ENCODE measurements at regions of chr17 and their contacts with region 1.

Region 1: DNA sequence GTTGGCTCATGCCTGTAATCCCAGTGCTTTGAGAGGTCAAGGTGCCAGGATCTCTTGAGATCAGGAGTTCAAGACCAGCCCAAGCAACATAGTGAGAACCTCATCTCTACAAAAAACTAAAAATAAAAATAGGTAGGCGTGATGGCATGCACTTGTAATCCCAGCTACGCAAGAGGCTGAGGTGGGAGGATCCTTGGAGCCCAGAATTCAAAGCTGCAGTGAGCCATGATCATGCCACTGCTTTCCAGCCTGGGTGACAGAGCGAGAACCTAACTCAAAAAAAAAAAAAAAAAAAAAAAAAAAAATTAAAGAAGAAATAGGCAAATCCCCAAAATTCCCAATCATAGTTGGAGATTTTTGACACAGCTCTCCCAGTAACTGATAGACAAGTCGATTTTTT is 32.2 kb upstream of the SRCIN1 start:
- DNase-seq: no peak
- H3K4me3 Mint-ChIP-seq: no peak overlapping the region
- H3K27ac Mint-ChIP-seq: no peak overlapping the region
- H3K4me1 Mint-ChIP-seq: no peaks in the 10 kb centered on the region
- H3K27me3 Mint-ChIP-seq: peaks cover 27% of the 10 kb centered on the region
- CTCF ChIP-seq: no peak

Region 2: GRCh38 chr17:38656959-38657823 is 19.2 kb after region 1 on chr17:
- CTCF ChIA-PET with region 1: interaction called, 10 read pairs
- intact Hi-C with region 1: no loop called
- DNase-seq: peak; percentile 88
- H3K4me3 Mint-ChIP-seq: peak overlapping the region; percentile 36
- H3K27ac Mint-ChIP-seq: peak overlapping the region; percentile 31
- H3K4me1 Mint-ChIP-seq: peaks cover 30% of the 10 kb centered on the region
- H3K27me3 Mint-ChIP-seq: peaks cover 49% of the 10 kb centered on the region
- CTCF ChIP-seq: no peak

Region 3: DNA sequence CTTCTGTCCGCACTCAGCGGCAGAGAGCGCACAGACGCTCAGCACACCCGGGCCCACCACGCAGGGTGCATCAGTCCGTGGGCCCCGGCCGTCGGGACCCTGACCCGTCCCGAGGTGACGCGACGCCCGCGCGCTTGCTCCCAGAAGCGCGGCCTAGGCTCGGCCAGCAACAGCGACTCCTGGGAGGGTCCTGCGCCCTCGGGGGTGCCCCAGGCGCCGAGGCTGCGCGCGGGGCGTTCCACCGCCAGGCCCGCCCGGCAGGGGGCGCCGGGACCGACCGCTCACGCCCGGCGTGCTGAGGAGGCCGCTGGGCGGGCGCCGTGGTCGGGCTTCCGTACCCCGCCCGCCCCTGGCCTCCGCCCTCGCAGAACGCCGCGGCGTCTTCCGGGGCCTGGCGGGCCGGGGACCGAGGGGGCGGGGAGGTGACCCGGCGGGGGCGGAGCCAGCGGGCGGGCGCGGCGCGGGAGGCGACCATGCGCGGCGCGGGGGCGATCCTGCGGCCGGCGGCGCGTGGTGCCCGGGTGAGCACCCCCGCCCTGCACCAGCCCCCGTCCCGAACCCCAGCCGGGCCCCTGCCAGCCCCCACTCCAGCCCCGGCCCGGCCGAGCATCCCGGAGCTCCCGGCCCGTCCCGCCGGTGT is 92.1 kb after region 1 on chr17 and contains the start of gene CISD3:
- CTCF ChIA-PET with region 1: no interaction called
- intact Hi-C with region 1: no loop called
- DNase-seq: peak; percentile 100
- H3K4me3 Mint-ChIP-seq: peak within 1 kb of the TSS; percentile 90
- H3K27ac Mint-ChIP-seq: peak within 1 kb of the TSS; percentile 85
- H3K4me1 Mint-ChIP-seq: peaks cover 48% of the 10 kb centered on the region
- H3K27me3 Mint-ChIP-seq: no peaks in the 10 kb centered on the region
- CTCF ChIP-seq: peak; percentile 100
- total RNA-seq, gene CISD3: 101 and 109 TPM in 2 replicates

Measured in Calu3 (cell line).